ENCODE measurements at regions of chr20 and their contacts with region 1.

Region 1: GRCh38 chr20:49078296-49078695 is 32.2 kb downstream of the CSE1L start:
- DNase-seq: no peak
- H3K4me3 ChIP-seq: no peak overlapping the region
- H3K4me3 Mint-ChIP-seq: no peak overlapping the region
- H3K27ac ChIP-seq: no peak overlapping the region
- H3K27ac Mint-ChIP-seq: no peak overlapping the region
- H3K4me1 ChIP-seq: no peaks in the 10 kb centered on the region
- H3K4me1 Mint-ChIP-seq: no peaks in the 10 kb centered on the region
- H3K27me3 ChIP-seq: no peaks in the 10 kb centered on the region
- H3K27me3 Mint-ChIP-seq: no peaks in the 10 kb centered on the region
- CTCF ChIP-seq: no peak

Region 2: DNA sequence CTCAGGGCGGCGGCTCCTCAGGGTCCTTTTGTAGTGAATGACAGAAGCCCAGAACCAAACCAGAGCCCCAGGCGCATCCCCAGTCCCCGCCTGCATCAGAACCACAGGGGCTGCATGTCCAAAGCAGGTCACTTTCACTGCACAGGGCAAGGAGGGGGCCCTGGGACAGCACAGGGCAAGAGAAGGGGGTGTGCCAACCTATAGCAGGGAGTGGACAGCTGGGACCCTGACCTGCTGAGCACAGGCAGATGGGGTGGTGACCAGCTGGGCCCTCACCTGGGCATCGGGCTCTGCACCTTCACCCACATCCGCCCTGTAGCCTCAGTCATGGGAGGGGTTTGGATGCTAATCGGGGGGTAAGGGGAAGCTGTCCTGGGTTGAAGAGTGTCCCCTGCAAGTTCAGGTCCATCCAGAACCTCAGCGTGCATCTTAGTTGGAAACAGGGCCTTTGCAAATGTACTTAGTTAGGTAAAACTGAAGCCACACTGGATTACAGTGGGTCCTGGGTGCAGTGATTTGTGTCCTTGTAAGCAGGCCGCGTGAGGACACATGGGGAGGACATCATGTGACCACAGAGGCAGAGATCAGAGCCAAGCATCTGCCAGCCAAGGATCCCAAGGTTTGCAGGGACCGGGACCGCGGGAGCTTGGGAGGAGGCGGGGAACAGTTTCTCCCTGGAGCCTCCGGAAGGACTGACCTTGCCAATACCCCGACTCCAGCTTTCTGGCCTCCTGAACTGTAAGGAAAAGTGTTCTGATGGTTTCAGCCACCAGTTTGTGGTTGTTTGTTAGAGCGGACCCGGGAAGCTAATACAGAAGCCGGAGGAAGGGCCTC is 751.6 kb before region 1 on chr20:
- intact Hi-C with region 1: no loop called
- DNase-seq: no peak
- H3K4me3 ChIP-seq: no peak overlapping the region
- H3K4me3 Mint-ChIP-seq: no peak overlapping the region
- H3K27ac ChIP-seq: no peak overlapping the region
- H3K27ac Mint-ChIP-seq: no peak overlapping the region
- H3K4me1 ChIP-seq: no peaks in the 10 kb centered on the region
- H3K4me1 Mint-ChIP-seq: no peaks in the 10 kb centered on the region
- H3K27me3 ChIP-seq: peaks cover 0 to under 1% of the 10 kb centered on the region in 2 donors
- H3K27me3 Mint-ChIP-seq: peaks cover 5 to 11% (median 8%) of the 10 kb centered on the region in 3 donors
- CTCF ChIP-seq: no peak

Region 3: DNA sequence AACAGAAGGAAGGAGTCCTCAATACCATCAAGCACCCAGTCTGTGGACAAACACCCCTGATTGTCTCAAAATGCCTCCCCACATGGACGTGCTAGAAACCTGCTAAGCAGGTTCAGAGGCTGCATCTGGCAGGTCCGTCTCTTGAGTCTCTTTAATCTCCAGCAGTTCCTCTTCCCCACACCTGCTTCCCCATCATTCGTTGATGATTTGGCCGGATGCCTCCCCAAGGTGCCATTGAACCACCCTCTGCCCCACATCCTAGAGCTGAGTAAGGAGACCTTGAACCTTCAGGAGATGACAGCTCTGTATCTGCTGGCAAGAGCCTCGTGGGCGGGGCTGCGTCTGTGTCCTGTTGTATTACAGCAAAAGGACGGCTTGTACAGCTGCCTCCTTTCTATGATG is 429.7 kb before region 1 on chr20:
- intact Hi-C with region 1: loop called in 1 of 2 experiments (anchors 10 kb)
- DNase-seq: no peak
- H3K4me3 ChIP-seq: no peak overlapping the region
- H3K4me3 Mint-ChIP-seq: no peak overlapping the region
- H3K27ac ChIP-seq: no peak overlapping the region
- H3K27ac Mint-ChIP-seq: peak overlapping the region in 1 of 7 donors; percentile 21
- H3K4me1 ChIP-seq: no peaks in the 10 kb centered on the region
- H3K4me1 Mint-ChIP-seq: no peaks in the 10 kb centered on the region
- H3K27me3 ChIP-seq: no peaks in the 10 kb centered on the region
- H3K27me3 Mint-ChIP-seq: peaks cover 0 to 2% (median 0%) of the 10 kb centered on the region in 3 donors
- CTCF ChIP-seq: no peak